Panc1 (cell line): ENCODE measurements at regions of chr14 and their contacts with region 1.

Region 1: GRCh38 chr14:74945823-74946682 is 9.3 kb downstream of the PGF start:
- DNase-seq: no peak
- ATAC-seq: peak; percentile 83
- H3K4me3 ChIP-seq: no peak overlapping the region
- H3K27ac ChIP-seq: no peak overlapping the region
- H3K4me1 ChIP-seq: peaks cover 7% of the 10 kb centered on the region; the same call in 1 of the 2 replicates
- H3K27me3 ChIP-seq: no peaks in the 10 kb centered on the region
- CTCF ChIP-seq: peak; percentile 92

Region 2: DNA sequence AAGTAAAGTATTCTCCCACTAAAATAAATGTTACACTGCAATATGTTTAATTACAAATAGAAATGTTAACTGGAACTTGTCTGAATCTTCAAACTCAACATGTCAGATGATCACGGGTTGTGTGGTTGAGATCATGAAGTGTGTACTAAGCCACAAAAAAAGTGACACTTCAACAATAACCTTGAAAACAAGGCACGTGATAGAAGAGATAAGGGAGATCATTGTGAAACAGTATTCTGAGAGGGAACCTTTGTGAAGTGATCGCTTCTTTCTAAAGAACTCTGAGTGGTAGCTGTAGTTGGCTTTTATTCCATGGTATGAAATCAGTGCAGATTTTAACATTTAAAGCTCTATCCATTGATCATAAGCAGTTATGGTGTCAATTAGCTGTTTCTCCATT is 801.3 kb before region 1 on chr14:
- CTCF ChIA-PET with region 1: no interaction called
- POLR2A ChIA-PET with region 1: no interaction called
- in situ Hi-C with region 1: no loop called
- intact Hi-C with region 1: no loop called
- DNase-seq: no peak
- ATAC-seq: no peak
- H3K4me3 ChIP-seq: no peak overlapping the region
- H3K27ac ChIP-seq: no peak overlapping the region
- H3K4me1 ChIP-seq: no peaks in the 10 kb centered on the region; the same call in none of the 2 replicates
- H3K27me3 ChIP-seq: no peaks in the 10 kb centered on the region
- CTCF ChIP-seq: no peak

Region 3: GRCh38 chr14:75002392-75003249 is 56.6 kb after region 1 on chr14 and contains the start of gene EIF2B2:
- CTCF ChIA-PET with region 1: no interaction called
- POLR2A ChIA-PET with region 1: no interaction called
- in situ Hi-C with region 1: no loop called
- intact Hi-C with region 1: loop called (anchors 10 kb)
- DNase-seq: peak; percentile 86
- ATAC-seq: peak; percentile 100
- H3K4me3 ChIP-seq: peak within 1 kb of the TSS; percentile 86 to 92
- H3K27ac ChIP-seq: peak within 1 kb of the TSS; percentile 89
- H3K4me1 ChIP-seq: peaks cover 8% of the 10 kb centered on the region; the same call in 1 of the 2 replicates
- H3K27me3 ChIP-seq: no peaks in the 10 kb centered on the region
- CTCF ChIP-seq: no peak
- total RNA-seq, gene EIF2B2: 37.5 TPM

Region 4: GRCh38 chr14:75018694-75019093 is 72.6 kb after region 1 on chr14:
- CTCF ChIA-PET with region 1: no interaction called
- POLR2A ChIA-PET with region 1: no interaction called
- in situ Hi-C with region 1: no loop called
- intact Hi-C with region 1: no loop called
- DNase-seq: no peak
- ATAC-seq: no peak
- H3K4me3 ChIP-seq: no peak overlapping the region
- H3K27ac ChIP-seq: no peak overlapping the region
- H3K4me1 ChIP-seq: no peaks in the 10 kb centered on the region
- H3K27me3 ChIP-seq: no peaks in the 10 kb centered on the region
- CTCF ChIP-seq: no peak

Region 5: GRCh38 chr14:75088574-75089373 is 142.7 kb after region 1 on chr14:
- CTCF ChIA-PET with region 1: interaction called, 4 read pairs
- POLR2A ChIA-PET with region 1: no interaction called
- in situ Hi-C with region 1: no loop called
- intact Hi-C with region 1: loop called (anchors 10 kb)
- DNase-seq: peak; percentile 41
- ATAC-seq: peak; percentile 80
- H3K4me3 ChIP-seq: no peak overlapping the region
- H3K27ac ChIP-seq: no peak overlapping the region
- H3K4me1 ChIP-seq: no peaks in the 10 kb centered on the region
- H3K27me3 ChIP-seq: no peaks in the 10 kb centered on the region
- CTCF ChIP-seq: peak; percentile 79